ENCODE measurements at regions of chr12 and their contacts with region 1.

Region 1: DNA sequence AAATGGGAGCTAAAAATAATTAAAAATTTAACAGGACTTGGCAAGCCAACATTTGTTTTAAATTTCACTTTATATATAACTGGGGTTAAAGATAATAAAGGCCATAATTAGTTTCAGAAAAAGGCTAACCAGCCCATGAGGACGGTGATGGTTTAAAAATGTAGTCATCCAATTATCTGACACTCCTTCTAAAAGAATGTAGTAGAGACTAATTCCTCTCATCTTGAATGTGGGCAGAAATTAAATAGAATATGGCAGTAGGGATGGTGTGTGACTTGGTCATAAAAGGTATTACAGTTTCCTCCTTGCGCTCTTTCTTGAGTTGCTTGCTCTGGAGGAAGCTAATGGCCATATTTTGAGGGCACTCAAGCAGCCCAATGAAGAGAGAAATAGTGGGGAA is 49.1 kb upstream of the PTPRB start:
- DNase-seq: no peak
- H3K4me3 ChIP-seq: no peak overlapping the region
- H3K27ac ChIP-seq: no peak overlapping the region
- H3K4me1 ChIP-seq: no peaks in the 10 kb centered on the region
- H3K27me3 ChIP-seq: no peaks in the 10 kb centered on the region
- CTCF ChIP-seq: no peak

Region 2: DNA sequence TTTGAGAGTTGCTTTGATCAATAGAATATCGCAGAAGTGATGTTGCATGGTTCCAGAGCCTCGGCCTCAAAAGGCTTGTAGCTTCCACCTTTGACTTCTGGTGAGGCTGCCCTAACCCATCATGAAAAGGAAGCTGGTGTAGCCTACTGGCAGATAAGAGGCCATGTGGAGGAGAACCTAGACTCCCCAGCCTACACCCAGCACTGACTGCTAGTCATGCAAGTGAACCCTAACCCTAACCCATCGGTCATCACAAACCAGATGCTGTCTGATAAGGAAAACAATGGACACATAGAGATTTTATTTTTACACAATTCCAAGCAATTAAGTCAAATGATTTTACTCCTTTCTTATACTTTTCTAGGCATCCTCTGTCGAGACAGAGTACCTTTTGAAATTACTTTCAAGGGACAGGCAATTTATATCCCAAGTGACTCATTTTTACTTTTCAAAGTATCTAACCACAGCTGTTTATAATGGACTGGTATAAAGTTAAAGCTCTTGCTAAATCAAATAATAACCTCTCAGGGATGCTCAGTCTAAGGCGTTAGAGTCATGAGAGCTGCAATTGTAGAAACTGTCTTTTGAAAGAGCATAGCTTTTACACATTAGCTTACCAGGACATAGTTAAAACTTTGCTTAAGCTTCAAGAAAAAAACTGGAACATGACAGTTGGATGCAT is 66.7 kb before region 1 on chr12:
- CTCF ChIA-PET with region 1: no interaction called
- dilution Hi-C with region 1: loop called (anchors 5 kb)
- in situ Hi-C with region 1: no loop called
- intact Hi-C with region 1: no loop called
- DNase-seq: no peak
- H3K4me3 ChIP-seq: no peak overlapping the region
- H3K27ac ChIP-seq: no peak overlapping the region
- H3K4me1 ChIP-seq: no peaks in the 10 kb centered on the region
- H3K27me3 ChIP-seq: no peaks in the 10 kb centered on the region
- CTCF ChIP-seq: no peak

Region 3: DNA sequence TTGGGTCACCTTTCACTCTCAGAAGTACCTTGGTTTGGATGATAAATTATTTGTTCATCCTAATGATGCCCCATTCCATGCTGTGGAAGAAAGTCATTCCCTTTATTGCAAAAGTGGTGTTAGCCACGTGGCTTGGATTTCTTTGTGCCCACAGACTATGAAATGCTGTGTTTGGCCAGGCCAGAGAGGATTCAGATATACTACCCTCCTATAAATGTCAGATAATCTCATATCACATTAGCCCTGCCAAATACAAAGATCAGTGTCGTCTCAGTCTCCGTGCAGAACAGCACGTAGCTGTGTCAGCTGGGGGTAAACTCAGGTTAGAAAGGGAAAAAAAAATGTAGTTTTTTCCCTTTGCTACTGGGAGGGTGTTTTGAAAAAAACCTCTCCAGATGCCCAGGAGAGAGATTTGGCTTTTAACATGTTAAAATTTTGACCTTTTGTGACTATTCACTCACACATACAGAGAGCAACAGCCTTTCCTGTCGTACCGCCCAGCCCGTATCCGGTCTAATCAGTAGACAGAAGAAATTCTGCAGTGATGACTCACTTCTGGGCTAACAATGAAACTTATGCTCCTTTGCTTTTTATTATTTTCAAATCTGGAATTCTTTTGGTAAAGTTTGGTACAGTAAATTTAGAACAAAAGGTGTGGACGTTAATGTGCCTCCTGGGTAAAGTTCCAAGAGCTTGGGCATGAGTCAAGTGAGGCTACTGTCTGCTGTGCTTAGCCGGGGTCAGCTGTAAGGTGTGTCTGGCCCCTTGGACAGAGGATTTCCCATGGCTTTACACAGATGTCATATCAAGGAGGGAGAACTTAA is 40.6 kb before region 1 on chr12:
- CTCF ChIA-PET with region 1: no interaction called
- dilution Hi-C with region 1: no loop called
- in situ Hi-C with region 1: no loop called
- intact Hi-C with region 1: loop called (anchors 5 kb)
- DNase-seq: peak; percentile 87
- H3K4me3 ChIP-seq: no peak overlapping the region
- H3K27ac ChIP-seq: peak overlapping the region; percentile 75
- H3K4me1 ChIP-seq: peaks cover 47% of the 10 kb centered on the region
- H3K27me3 ChIP-seq: no peaks in the 10 kb centered on the region
- CTCF ChIP-seq: no peak

Region 4: GRCh38 chr12:70733385-70733784 is 47.1 kb after region 1 on chr12:
- CTCF ChIA-PET with region 1: no interaction called
- dilution Hi-C with region 1: no loop called
- in situ Hi-C with region 1: no loop called
- intact Hi-C with region 1: no loop called
- DNase-seq: peak; percentile 60
- H3K4me3 ChIP-seq: no peak overlapping the region
- H3K27ac ChIP-seq: no peak overlapping the region
- H3K4me1 ChIP-seq: no peaks in the 10 kb centered on the region
- H3K27me3 ChIP-seq: no peaks in the 10 kb centered on the region
- CTCF ChIP-seq: peak; percentile 63 to 74

Region 5: GRCh38 chr12:71045781-71046180 is 359.5 kb after region 1 on chr12:
- CTCF ChIA-PET with region 1: no interaction called
- dilution Hi-C with region 1: no loop called
- in situ Hi-C with region 1: no loop called
- intact Hi-C with region 1: no loop called
- DNase-seq: no peak
- H3K4me3 ChIP-seq: no peak overlapping the region
- H3K27ac ChIP-seq: no peak overlapping the region
- H3K4me1 ChIP-seq: no peaks in the 10 kb centered on the region
- H3K27me3 ChIP-seq: no peaks in the 10 kb centered on the region
- CTCF ChIP-seq: no peak